ENCODE measurements at regions of chr22 and their contacts with region 1.

Region 1: GRCh38 chr22:50620593-50621355 is 7.2 kb downstream of the ARSA start:
- DNase-seq: peak; percentile 91
- H3K4me3 ChIP-seq: peak overlapping the region; percentile 39
- H3K27ac ChIP-seq: no peak overlapping the region
- H3K4me1 ChIP-seq: peaks cover 14% of the 10 kb centered on the region
- H3K27me3 ChIP-seq: no peaks in the 10 kb centered on the region
- CTCF ChIP-seq: peak; percentile 76

Region 2: GRCh38 chr22:50148991-50149721 is 471.6 kb before region 1 on chr22:
- CTCF ChIA-PET with region 1: no interaction called
- POLR2A ChIA-PET with region 1: no interaction called
- intact Hi-C with region 1: loop called (anchors 5 kb)
- DNase-seq: peak; percentile 57
- H3K4me3 ChIP-seq: no peak overlapping the region
- H3K27ac ChIP-seq: no peak overlapping the region
- H3K4me1 ChIP-seq: no peaks in the 10 kb centered on the region
- H3K27me3 ChIP-seq: no peaks in the 10 kb centered on the region
- CTCF ChIP-seq: peak; percentile 78

Region 3: DNA sequence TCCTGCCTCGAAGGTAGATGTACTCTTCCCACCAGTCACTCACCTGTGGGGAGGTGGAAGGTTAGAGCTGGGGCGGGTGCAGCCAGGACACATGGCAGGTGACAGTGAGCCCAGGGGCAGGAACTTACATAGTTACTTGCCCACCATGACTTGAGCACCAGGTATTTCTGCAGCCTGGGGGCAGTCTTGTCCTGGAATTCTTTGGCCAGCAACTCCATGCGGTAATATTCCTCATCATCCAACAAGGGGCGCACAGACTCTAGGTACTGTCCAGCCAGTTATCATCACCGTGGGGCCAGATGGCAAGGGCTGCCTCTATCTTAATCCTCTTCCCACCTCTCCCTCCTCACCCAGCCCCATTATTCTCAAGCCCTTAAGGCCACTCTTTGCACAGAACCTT is 44.7 kb before region 1 on chr22:
- CTCF ChIA-PET with region 1: no interaction called
- POLR2A ChIA-PET with region 1: no interaction called
- intact Hi-C with region 1: loop called (anchors 1 kb)
- DNase-seq: peak; percentile 44
- H3K4me3 ChIP-seq: no peak overlapping the region
- H3K27ac ChIP-seq: no peak overlapping the region
- H3K4me1 ChIP-seq: no peaks in the 10 kb centered on the region
- H3K27me3 ChIP-seq: no peaks in the 10 kb centered on the region
- CTCF ChIP-seq: peak; percentile 50

Region 4: GRCh38 chr22:50691521-50691920 is 70.7 kb after region 1 on chr22:
- CTCF ChIA-PET with region 1: no interaction called
- POLR2A ChIA-PET with region 1: no interaction called
- intact Hi-C with region 1: loop called (anchors 5 kb)
- DNase-seq: peak; percentile 58
- H3K4me3 ChIP-seq: no peak overlapping the region
- H3K27ac ChIP-seq: no peak overlapping the region
- H3K4me1 ChIP-seq: no peaks in the 10 kb centered on the region
- H3K27me3 ChIP-seq: no peaks in the 10 kb centered on the region
- CTCF ChIP-seq: peak; percentile 70